SK-N-SH (cell line): ENCODE measurements at regions of chr12 and their contacts with region 1.

Region 1: DNA sequence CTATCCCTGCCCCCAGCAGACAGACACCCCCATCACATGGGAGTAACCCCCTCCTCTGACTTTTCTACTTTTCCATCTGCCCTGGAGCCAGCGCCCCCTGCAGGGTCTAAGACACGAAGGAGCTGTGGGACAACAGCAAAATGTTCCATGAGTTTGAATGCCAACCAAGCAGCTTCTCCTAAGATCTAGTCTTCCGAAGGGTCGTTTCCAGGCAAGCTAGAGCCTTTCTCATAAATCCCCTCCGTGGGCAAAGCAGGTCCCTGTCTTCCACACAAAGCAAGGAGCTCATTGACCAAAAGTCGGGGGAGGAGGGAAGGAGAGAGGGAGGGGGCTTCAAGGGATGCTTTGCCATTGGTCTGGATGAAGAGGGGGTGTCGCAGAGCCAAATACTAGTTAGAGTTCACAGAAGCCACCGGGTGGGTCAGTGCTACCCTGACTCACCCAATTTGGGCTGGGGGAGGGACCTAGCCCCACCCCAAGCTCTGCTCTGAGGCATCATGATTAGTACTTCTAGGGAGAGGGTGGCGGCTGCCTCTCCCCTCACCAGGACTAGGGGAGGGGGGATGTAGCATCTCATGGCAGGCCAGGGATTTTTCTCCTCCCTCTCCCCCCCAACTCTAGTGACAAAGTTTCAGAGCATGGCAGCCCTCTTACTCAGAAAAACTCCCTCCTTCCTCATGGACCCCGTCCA is 1.6 kb downstream of the MSI1 start:
- DNase-seq: peak; percentile 70
- H3K4me3 ChIP-seq: peak overlapping the region; percentile 26 to 60; a peak in 3 of 4 replicates
- H3K27ac ChIP-seq: peak overlapping the region in 1 of 2 experiments; percentile 39; a peak in 1 of 4 replicates
- H3K4me1 ChIP-seq: peaks cover 0 to 35% of the 10 kb centered on the region in 2 experiments; a peak in 1 of 4 replicates
- H3K27me3 ChIP-seq: peaks cover 36% of the 10 kb centered on the region
- CTCF ChIP-seq: peak; percentile 60
- EP300 ChIP-seq: no peak
- RAD21 ChIP-seq: peak; percentile 39

Region 2: GRCh38 chr12:120356567-120357030 is 10.8 kb before region 1 on chr12:
- CTCF ChIA-PET with region 1: interaction called, 15 read pairs
- POLR2A ChIA-PET with region 1: interaction called, 3 read pairs
- DNase-seq: peak; percentile 93
- H3K4me3 ChIP-seq: no peak overlapping the region
- H3K27ac ChIP-seq: no peak overlapping the region
- H3K4me1 ChIP-seq: peaks cover 0 to 5% of the 10 kb centered on the region in 2 experiments; a peak in 1 of 4 replicates
- H3K27me3 ChIP-seq: no peaks in the 10 kb centered on the region
- CTCF ChIP-seq: peak; percentile 93
- EP300 ChIP-seq: 0 out of 4 replicates have a peak, but pooled peaks of 1 of the 2 experiments have one; percentile 19
- RAD21 ChIP-seq: peak; percentile 95

Region 3: GRCh38 chr12:120381752-120382419 is 14.5 kb after region 1 on chr12:
- CTCF ChIA-PET with region 1: interaction called, 11 read pairs
- POLR2A ChIA-PET with region 1: no interaction called
- DNase-seq: no peak
- H3K4me3 ChIP-seq: no peak overlapping the region
- H3K27ac ChIP-seq: no peak overlapping the region
- H3K4me1 ChIP-seq: no peaks in the 10 kb centered on the region
- H3K27me3 ChIP-seq: peaks cover 7% of the 10 kb centered on the region; the same call in 1 of the 2 replicates
- CTCF ChIP-seq: no peak
- EP300 ChIP-seq: no peak
- RAD21 ChIP-seq: no peak